K562 (cell line): ENCODE measurements at regions of chr1 and their contacts with region 1.

Region 1: GRCh38 chr1:215566556-215567490 is at the start of gene KCTD3:
- DNase-seq: peak; percentile 73 to 87 (median 76)
- ATAC-seq: peak; percentile 74
- H3K4me3 ChIP-seq: peak within 1 kb of the TSS; percentile 84
- H3K27ac ChIP-seq: peak within 1 kb of the TSS; percentile 82
- H3K4me1 ChIP-seq: peaks cover 11 to 13% of the 10 kb centered on the region in 2 experiments; a peak in 3 of 5 replicates
- H3K27me3 ChIP-seq: no peaks in the 10 kb centered on the region
- CTCF ChIP-seq: no peak
- EP300 ChIP-seq: no peak; the same call in 1 of the 2 replicates
- POLR2A ChIP-seq: peak; percentile 77
- RAD21 ChIP-seq: no peak
- polyA plus RNA-seq, gene KCTD3: 12.8 to 18.2 TPM

Region 2: DNA sequence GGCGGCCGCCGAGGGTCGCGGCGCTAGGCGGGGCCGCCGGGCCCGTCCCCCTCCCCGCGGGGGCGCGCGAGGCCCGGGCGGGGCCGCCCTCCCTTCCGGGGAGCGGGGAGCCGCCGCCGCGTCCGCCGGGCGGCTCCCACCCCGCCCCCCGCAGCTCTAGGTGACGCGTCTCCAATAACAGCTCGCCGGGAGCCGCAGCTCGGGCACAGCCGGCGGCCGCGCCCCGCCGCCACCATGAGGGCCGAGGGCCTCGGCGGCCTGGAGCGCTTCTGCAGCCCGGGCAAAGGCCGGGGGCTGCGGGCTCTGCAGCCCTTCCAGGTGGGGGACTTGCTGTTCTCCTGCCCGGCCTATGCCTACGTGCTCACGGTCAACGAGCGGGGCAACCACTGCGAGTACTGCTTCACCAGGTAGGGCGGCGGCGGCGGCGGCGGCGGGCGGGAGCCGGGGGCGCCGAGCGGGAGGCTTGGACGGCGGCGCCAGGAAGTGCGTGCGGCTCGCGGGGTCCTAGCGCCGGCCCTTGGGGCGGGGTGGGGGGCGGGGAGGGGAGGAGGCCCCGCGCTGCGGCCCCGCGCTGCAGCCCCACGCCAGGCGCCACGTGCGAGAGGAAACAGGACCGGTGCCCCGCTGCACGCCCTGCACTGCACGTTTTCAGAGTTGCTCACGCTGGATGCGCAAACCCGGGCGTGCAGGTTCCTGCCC is 1285.7 kb before region 1 on chr1 and contains the start of gene SMYD2:
- CTCF ChIA-PET with region 1: no interaction called
- POLR2A ChIA-PET with region 1: no interaction called
- in situ Hi-C with region 1: no loop called
- intact Hi-C with region 1: loop called (anchors 5 kb)
- DNase-seq: peak; percentile 89 to 96 (median 92)
- ATAC-seq: peak; percentile 84
- H3K4me3 ChIP-seq: peak within 1 kb of the TSS; percentile 81
- H3K27ac ChIP-seq: peak within 1 kb of the TSS; percentile 92
- H3K4me1 ChIP-seq: peaks cover 14 to 18% of the 10 kb centered on the region in 2 experiments
- H3K27me3 ChIP-seq: no peaks in the 10 kb centered on the region
- CTCF ChIP-seq: no peak
- EP300 ChIP-seq: no peak
- POLR2A ChIP-seq: peak; percentile 82
- RAD21 ChIP-seq: no peak
- polyA plus RNA-seq, gene SMYD2: 13.8 to 16.6 TPM

Region 3: GRCh38 chr1:215226757-215227156 is 340.1 kb before region 1 on chr1:
- CTCF ChIA-PET with region 1: no interaction called
- POLR2A ChIA-PET with region 1: no interaction called
- in situ Hi-C with region 1: no loop called
- intact Hi-C with region 1: no loop called
- DNase-seq: no peak
- ATAC-seq: no peak
- H3K4me3 ChIP-seq: no peak overlapping the region
- H3K27ac ChIP-seq: no peak overlapping the region
- H3K4me1 ChIP-seq: no peaks in the 10 kb centered on the region
- H3K27me3 ChIP-seq: no peaks in the 10 kb centered on the region
- CTCF ChIP-seq: no peak
- EP300 ChIP-seq: no peak
- POLR2A ChIP-seq: no peak
- RAD21 ChIP-seq: no peak

Region 4: DNA sequence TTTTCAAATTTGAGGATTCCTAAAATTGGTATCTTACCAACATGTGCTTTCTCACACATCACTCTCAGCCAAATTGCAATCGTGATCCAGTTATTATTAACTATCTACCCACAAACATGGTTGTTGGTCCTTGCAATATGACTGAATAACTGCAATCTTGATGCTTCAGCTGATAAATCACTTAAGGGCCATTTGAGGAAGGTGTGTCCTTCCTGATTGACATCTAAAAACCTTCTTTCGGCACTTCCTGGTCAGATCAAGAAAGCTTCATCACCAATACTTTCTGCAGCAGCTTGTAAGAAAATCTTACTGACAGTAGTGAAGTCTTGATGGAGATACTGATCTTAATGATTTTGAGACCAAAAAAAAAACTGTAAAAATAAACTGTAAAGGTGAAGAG is 48.2 kb before region 1 on chr1:
- CTCF ChIA-PET with region 1: no interaction called
- POLR2A ChIA-PET with region 1: no interaction called
- in situ Hi-C with region 1: no loop called
- intact Hi-C with region 1: no loop called
- DNase-seq: no peak
- ATAC-seq: no peak
- H3K4me3 ChIP-seq: no peak overlapping the region
- H3K27ac ChIP-seq: no peak overlapping the region
- H3K4me1 ChIP-seq: no peaks in the 10 kb centered on the region
- H3K27me3 ChIP-seq: no peaks in the 10 kb centered on the region
- CTCF ChIP-seq: no peak
- EP300 ChIP-seq: no peak
- POLR2A ChIP-seq: no peak
- RAD21 ChIP-seq: no peak

Region 5: GRCh38 chr1:215597961-215598360 is 31.1 kb after region 1 on chr1:
- CTCF ChIA-PET with region 1: no interaction called
- POLR2A ChIA-PET with region 1: interaction called, 4 read pairs
- in situ Hi-C with region 1: no loop called
- intact Hi-C with region 1: loop called (anchors 2 kb)
- DNase-seq: no peak
- ATAC-seq: no peak
- H3K4me3 ChIP-seq: no peak overlapping the region
- H3K27ac ChIP-seq: no peak overlapping the region
- H3K4me1 ChIP-seq: no peaks in the 10 kb centered on the region; a peak in 1 of 5 replicates
- H3K27me3 ChIP-seq: no peaks in the 10 kb centered on the region
- CTCF ChIP-seq: no peak
- EP300 ChIP-seq: no peak
- POLR2A ChIP-seq: no peak
- RAD21 ChIP-seq: no peak